Mammary epithelial cell (primary cell): ENCODE measurements at regions of chr17 and their contacts with region 1.

Region 1: GRCh38 chr17:75965475-75965874 is 13.5 kb downstream of the ACOX1 start:
- DNase-seq: no peak
- H3K4me3 ChIP-seq: no peak overlapping the region
- H3K27ac ChIP-seq: no peak overlapping the region
- H3K4me1 ChIP-seq: no peaks in the 10 kb centered on the region
- H3K27me3 ChIP-seq: no peaks in the 10 kb centered on the region
- CTCF ChIP-seq: no peak

Region 2: DNA sequence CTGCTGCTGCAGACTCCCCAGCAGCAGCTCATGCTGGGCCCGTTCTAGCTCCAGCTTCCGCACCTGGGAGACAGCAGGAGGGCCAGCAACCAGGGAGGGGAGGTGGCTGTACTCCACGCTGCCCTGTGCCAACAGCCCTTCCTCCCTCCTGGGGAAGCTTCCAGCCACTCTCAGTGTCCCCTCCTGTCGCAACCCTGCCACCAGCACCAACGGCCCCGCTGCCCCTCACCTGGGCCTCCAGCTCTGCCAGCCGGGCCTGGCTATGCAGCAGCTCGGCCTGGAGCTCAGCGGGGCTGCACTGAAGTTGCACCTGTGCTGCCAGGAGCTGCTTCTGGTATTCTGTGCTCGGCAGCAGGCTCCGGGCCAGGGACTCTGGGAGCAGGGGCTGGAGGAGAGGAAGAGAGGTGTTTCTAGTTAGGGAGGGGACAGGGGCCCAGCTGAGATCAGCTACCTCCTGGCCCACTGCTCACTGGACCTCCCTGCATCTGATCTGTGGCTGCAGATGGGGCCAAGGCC is 45.4 kb before region 1 on chr17:
- CTCF ChIA-PET with region 1: no interaction called
- dilution Hi-C with region 1: loop called (anchors 5 kb)
- in situ Hi-C with region 1: no loop called
- intact Hi-C with region 1: no loop called
- DNase-seq: no peak
- H3K4me3 ChIP-seq: no peak overlapping the region
- H3K27ac ChIP-seq: no peak overlapping the region
- H3K4me1 ChIP-seq: no peaks in the 10 kb centered on the region
- H3K27me3 ChIP-seq: no peaks in the 10 kb centered on the region
- CTCF ChIP-seq: no peak

Region 3: DNA sequence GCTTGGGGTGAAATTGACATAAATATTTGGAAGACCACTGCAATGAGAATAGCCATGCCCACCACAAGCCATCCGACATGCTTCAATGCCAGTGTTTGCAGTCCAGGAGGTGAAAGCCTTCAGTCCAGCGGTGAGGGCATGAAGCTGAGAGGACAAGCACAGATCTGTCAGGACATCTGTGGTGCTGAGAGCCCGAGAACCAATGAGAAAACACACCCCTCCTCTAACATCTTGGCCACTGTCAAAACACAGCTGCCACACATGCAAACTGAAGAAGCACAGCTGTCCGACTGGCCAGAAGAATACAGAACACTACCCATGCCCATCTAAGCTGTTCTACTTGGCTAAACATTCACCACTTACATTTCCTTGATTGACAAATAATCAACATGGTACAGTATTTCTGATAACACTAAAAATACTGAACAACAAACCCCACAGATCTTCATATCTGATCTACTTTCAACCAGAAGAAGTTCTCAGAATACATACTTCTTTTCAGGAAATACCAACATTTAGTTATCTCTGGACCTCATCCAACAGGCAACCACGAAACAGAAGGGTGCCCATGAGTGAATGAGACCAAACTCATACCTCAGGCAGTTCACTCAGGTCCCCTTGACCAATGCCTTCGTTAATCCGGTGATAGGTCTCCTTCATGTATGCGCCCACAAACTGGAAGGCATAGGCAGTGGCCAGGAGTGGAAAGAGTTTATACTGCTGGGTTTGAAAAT is 14.5 kb before region 1 on chr17:
- CTCF ChIA-PET with region 1: no interaction called
- dilution Hi-C with region 1: no loop called
- in situ Hi-C with region 1: no loop called
- intact Hi-C with region 1: no loop called
- DNase-seq: no peak
- H3K4me3 ChIP-seq: no peak overlapping the region
- H3K27ac ChIP-seq: no peak overlapping the region
- H3K4me1 ChIP-seq: no peaks in the 10 kb centered on the region
- H3K27me3 ChIP-seq: no peaks in the 10 kb centered on the region
- CTCF ChIP-seq: no peak

Region 4: GRCh38 chr17:76053246-76054116 is 88.0 kb after region 1 on chr17:
- CTCF ChIA-PET with region 1: no interaction called
- dilution Hi-C with region 1: loop called (anchors 5 kb)
- in situ Hi-C with region 1: no loop called
- intact Hi-C with region 1: no loop called
- DNase-seq: peak; percentile 44
- H3K4me3 ChIP-seq: no peak overlapping the region
- H3K27ac ChIP-seq: peak overlapping the region; percentile 35
- H3K4me1 ChIP-seq: peaks cover 17% of the 10 kb centered on the region
- H3K27me3 ChIP-seq: no peaks in the 10 kb centered on the region
- CTCF ChIP-seq: no peak